ENCODE measurements at regions of chr2 and their contacts with region 1.

Region 1: GRCh38 chr2:235779444-235779896 is 285.6 kb downstream of the AGAP1 start:
- DNase-seq: peak; percentile 64
- ATAC-seq: peak; percentile 99
- H3K4me3 ChIP-seq: no peak overlapping the region
- H3K27ac ChIP-seq: no peak overlapping the region
- H3K4me1 ChIP-seq: no peaks in the 10 kb centered on the region
- H3K27me3 ChIP-seq: no peaks in the 10 kb centered on the region
- CTCF ChIP-seq: peak; percentile 88
- POLR2A ChIP-seq: no peak
- RAD21 ChIP-seq: peak; percentile 93

Region 2: DNA sequence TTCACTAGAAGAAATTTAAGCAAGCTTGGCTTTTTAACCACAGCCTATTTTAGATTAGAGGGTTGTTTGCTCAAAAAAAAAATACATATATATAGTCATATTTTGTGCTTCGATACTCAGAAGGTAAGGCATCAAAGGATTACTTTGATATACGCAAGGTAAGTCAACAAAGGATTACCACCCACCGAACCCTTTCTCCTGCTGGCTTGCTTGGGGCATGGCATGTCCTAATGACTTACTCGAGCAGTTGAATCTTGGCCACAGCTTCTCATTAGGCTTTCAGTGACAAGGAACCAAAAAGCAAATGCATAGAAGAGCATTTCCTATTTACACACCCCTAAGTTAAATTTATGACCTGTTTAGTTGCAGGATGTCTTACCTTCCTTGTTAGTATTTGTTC is 10.1 kb after region 1 on chr2:
- CTCF ChIA-PET with region 1: interaction called, 20 read pairs
- POLR2A ChIA-PET with region 1: no interaction called
- dilution Hi-C with region 1: no loop called
- in situ Hi-C with region 1: no loop called
- intact Hi-C with region 1: no loop called
- DNase-seq: no peak
- ATAC-seq: no peak
- H3K4me3 ChIP-seq: no peak overlapping the region
- H3K27ac ChIP-seq: no peak overlapping the region
- H3K4me1 ChIP-seq: no peaks in the 10 kb centered on the region
- H3K27me3 ChIP-seq: no peaks in the 10 kb centered on the region
- CTCF ChIP-seq: no peak
- POLR2A ChIP-seq: no peak
- RAD21 ChIP-seq: no peak

Region 3: DNA sequence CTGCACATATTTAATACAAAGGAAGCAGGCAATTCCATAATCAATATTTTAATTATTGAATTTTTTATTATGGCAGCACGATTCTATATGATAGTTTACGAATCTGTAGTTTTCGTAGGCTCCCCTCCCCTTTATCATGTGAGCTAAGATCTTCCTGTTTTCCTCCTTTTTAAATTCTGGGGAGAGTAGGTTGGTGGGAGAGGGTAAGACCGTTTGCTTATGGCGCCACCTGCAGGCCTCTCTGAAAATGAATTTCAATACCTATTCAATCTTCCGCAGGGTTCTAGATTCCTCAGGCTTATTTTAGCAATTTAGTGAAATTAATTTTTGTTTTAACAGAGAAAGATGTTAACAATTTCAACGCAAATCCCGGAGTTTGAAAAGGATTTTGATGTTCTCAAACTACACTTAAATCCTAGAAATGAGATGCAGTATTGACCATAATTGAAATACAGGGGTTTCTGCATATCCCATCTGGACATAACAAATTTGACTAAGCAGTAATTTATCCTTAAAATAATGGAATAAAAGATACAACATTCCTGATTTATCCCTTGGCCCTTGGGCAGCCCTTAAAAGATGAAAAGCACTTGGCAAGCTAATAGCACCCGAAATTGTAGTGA is 401.5 kb after region 1 on chr2:
- CTCF ChIA-PET with region 1: interaction called, 32 read pairs
- POLR2A ChIA-PET with region 1: no interaction called
- dilution Hi-C with region 1: loop called (anchors 25 kb)
- in situ Hi-C with region 1: no loop called
- intact Hi-C with region 1: loop called (anchors 1 kb)
- DNase-seq: peak; percentile 65
- ATAC-seq: peak; percentile 40
- H3K4me3 ChIP-seq: no peak overlapping the region
- H3K27ac ChIP-seq: no peak overlapping the region
- H3K4me1 ChIP-seq: peaks cover 6% of the 10 kb centered on the region; the same call in 1 of the 2 replicates
- H3K27me3 ChIP-seq: peaks cover 8% of the 10 kb centered on the region; the same call in 1 of the 2 replicates
- CTCF ChIP-seq: peak; percentile 81
- POLR2A ChIP-seq: no peak
- RAD21 ChIP-seq: peak; percentile 78

Region 4: DNA sequence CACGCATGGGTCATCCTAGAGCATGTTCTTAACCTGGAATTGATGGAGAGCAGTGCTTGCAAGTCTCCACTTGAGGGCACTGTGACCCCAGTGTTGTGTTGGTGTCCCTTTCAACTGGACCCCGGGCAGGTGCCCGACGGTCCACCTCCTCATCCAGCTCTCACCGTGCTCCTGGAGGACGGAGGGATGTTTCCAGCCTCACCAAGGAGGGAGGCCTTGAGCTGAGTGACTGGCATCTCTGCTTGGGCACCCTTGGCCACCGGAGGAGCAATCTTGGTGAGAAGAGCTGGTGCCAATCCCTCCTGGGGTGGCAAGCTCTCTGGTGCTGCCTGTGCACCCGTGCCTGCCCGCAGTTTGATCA is 530.2 kb after region 1 on chr2:
- CTCF ChIA-PET with region 1: no interaction called
- POLR2A ChIA-PET with region 1: no interaction called
- dilution Hi-C with region 1: no loop called
- in situ Hi-C with region 1: loop called (anchors 25 kb)
- intact Hi-C with region 1: no loop called
- DNase-seq: no peak
- ATAC-seq: no peak
- H3K4me3 ChIP-seq: no peak overlapping the region
- H3K27ac ChIP-seq: no peak overlapping the region
- H3K4me1 ChIP-seq: no peaks in the 10 kb centered on the region
- H3K27me3 ChIP-seq: no peaks in the 10 kb centered on the region; the same call in 1 of the 2 replicates
- CTCF ChIP-seq: 0 out of 2 replicates have a peak, but pooled peaks have one; percentile 8
- POLR2A ChIP-seq: no peak
- RAD21 ChIP-seq: no peak

Region 5: DNA sequence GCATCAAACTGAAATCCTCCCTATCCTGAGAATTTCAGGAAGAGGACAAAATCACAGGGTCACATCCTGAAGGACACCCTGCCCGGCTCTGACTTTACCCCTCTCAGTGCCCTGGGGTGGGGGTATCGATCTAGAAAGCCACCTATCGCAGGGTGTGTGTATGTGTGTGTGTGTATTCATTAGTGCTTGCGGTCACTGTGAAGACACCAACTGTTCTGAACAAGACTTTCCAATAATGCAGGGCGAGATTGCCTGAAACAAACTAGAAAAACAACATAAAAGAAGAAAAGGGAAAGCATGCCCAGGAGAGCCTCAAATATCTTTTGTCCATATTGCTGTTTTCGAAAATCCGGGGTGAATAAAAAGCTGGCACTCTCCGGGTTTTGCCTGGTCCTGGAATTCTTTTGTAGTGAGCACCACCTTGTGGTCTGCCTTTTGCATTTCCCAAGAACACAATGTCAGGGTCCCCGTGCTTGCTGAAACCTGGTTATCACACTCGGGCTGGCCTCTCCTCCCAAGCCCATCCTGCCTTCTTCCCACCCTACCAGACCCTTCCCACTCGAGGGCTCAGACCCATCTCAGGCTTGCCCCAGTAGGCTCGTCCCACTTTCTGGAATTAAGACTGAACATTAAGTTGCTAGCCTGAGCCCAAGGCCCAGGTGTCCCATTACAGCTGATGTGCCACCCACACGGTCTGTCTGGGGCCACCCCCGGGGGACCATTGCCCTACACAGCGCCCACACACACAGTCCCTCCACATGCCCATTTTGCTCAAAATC is 1281.3 kb after region 1 on chr2:
- CTCF ChIA-PET with region 1: no interaction called
- POLR2A ChIA-PET with region 1: no interaction called
- dilution Hi-C with region 1: no loop called
- in situ Hi-C with region 1: loop called (anchors 10 kb)
- intact Hi-C with region 1: no loop called
- DNase-seq: peak; percentile 72
- ATAC-seq: peak; percentile 88
- H3K4me3 ChIP-seq: no peak overlapping the region
- H3K27ac ChIP-seq: no peak overlapping the region
- H3K4me1 ChIP-seq: peaks cover 4% of the 10 kb centered on the region; the same call in 1 of the 2 replicates
- H3K27me3 ChIP-seq: 0 out of 2 replicates have a peak, but pooled peaks cover 2% of the 10 kb centered on the region
- CTCF ChIP-seq: peak; percentile 86
- POLR2A ChIP-seq: no peak
- RAD21 ChIP-seq: peak; percentile 90

Region 6: GRCh38 chr2:237072067-237072931 is 1292.8 kb after region 1 on chr2:
- CTCF ChIA-PET with region 1: no interaction called
- POLR2A ChIA-PET with region 1: no interaction called
- dilution Hi-C with region 1: no loop called
- in situ Hi-C with region 1: loop called (anchors 10 kb)
- intact Hi-C with region 1: loop called (anchors 10 kb)
- DNase-seq: peak; percentile 61
- ATAC-seq: 0 out of 2 replicates have a peak, but pooled peaks have one; percentile 21
- H3K4me3 ChIP-seq: no peak overlapping the region
- H3K27ac ChIP-seq: no peak overlapping the region
- H3K4me1 ChIP-seq: peaks cover 20% of the 10 kb centered on the region
- H3K27me3 ChIP-seq: no peaks in the 10 kb centered on the region
- CTCF ChIP-seq: peak; percentile 90
- POLR2A ChIP-seq: no peak
- RAD21 ChIP-seq: peak; percentile 83

Measured in IMR-90 (cell line).